ENCODE measurements at regions of chr17 and their contacts with region 1.

Region 1: GRCh38 chr17:64479650-64480049 is 17.2 kb downstream of the POLG2 start:
- DNase-seq: no peak
- H3K4me3 ChIP-seq: no peak overlapping the region
- H3K27ac ChIP-seq: no peak overlapping the region
- H3K4me1 ChIP-seq: no peaks in the 10 kb centered on the region
- H3K27me3 ChIP-seq: no peaks in the 10 kb centered on the region
- CTCF ChIP-seq: no peak

Region 2: DNA sequence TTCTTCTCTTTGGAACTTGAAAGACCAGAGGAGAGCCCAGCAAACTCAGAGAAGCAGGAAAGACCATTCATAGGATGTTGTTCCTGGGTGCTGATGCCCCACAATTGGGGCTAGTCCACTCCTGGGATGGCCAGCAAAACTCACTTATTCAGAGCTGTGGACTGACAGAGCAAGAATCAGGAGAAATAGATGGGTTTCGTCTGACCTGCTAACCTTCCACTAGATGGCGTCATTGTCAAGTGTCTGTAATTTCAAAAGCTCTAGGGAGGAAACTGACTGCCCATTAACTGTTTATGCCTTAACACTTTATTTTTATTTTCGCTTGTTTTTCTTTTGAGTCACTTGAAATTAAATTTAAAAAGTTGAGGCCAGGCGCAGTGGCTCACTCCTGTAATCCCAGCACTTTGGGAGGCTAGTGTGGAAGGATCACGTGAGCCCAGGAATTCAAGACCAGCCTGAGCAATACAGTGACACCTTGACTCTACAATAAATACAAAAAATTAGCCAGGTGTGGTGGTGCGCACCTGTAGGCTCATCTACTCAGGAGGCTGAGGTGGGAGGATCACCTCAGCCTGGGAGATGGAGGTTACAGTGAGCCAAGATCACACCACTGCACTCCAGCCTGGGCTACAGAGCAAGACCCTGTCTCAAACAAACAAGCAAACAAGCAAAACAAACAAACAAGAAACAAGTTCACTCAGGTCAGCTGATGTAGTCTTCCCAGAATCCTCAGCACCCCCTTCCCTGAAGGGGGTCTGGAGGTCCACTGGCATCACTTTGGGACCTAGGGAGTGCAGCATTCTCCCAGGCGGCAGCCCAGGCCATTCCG is 59.3 kb before region 1 on chr17:
- dilution Hi-C with region 1: loop called (anchors 5 kb)
- DNase-seq: peak; percentile 4
- H3K4me3 ChIP-seq: no peak overlapping the region
- H3K27ac ChIP-seq: no peak overlapping the region
- H3K4me1 ChIP-seq: no peaks in the 10 kb centered on the region
- H3K27me3 ChIP-seq: no peaks in the 10 kb centered on the region
- CTCF ChIP-seq: peak; percentile 62 to 72 (median 68)

Region 3: DNA sequence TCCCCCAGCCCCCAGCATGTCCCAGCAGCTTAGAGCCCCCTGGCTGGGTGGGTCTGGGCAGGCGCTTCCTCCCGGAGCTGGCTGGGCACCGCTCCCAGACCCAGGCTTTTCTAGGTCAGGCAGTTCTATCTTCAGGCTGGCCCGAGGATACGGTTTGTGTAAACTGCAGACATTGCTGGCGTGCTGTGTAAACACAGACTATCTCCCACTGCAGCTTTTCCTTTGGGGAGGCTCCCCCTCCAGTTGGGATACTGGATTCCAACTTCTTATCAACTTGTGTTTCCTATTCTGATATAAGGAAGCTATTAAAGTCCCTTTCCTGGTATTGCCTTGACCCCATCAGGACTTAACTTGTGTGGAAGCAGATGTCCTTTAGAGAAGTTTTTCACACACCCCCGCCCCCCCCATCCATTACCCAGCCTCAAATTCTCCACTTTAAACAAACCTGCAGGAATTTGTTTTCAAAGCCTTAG is 595.2 kb after region 1 on chr17:
- dilution Hi-C with region 1: no loop called
- DNase-seq: no peak
- H3K4me3 ChIP-seq: no peak overlapping the region
- H3K27ac ChIP-seq: no peak overlapping the region
- H3K4me1 ChIP-seq: peaks cover 18% of the 10 kb centered on the region
- H3K27me3 ChIP-seq: no peaks in the 10 kb centered on the region
- CTCF ChIP-seq: no peak

Measured in keratinocyte (primary cell).